ENCODE measurements at regions of chr13 and their contacts with region 1.

Region 1: DNA sequence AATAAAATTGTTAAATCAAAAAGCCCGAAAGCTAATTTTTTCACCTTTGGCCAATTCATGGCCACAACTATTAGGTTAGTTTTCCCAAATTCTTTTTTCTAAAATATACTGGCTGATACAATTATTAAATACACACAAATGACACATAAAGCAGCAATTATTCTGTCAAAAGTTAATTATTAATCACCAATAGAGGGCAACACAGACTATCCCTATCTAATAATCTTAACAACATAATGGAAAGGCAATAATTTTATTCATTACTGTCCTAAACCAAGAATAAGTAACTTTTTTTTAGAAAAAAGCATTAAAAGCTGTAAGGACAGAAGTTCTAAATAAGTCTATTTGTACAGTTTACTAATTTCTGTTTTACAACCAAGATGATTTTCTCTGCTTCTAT is 51.7 kb downstream of the KATNAL1 start:
- DNase-seq: no peak
- ATAC-seq: no peak
- H3K4me3 Mint-ChIP-seq: no peak overlapping the region
- H3K27ac Mint-ChIP-seq: no peak overlapping the region
- H3K4me1 Mint-ChIP-seq: peaks cover 3% of the 10 kb centered on the region
- H3K27me3 Mint-ChIP-seq: no peaks in the 10 kb centered on the region

Region 2: GRCh38 chr13:30241532-30241931 is 14.2 kb before region 1 on chr13:
- POLR2A ChIA-PET with region 1: interaction called, 10 read pairs
- DNase-seq: no peak
- ATAC-seq: no peak
- H3K4me3 Mint-ChIP-seq: no peak overlapping the region
- H3K27ac Mint-ChIP-seq: no peak overlapping the region
- H3K4me1 Mint-ChIP-seq: no peaks in the 10 kb centered on the region
- H3K27me3 Mint-ChIP-seq: no peaks in the 10 kb centered on the region